Head of caudate nucleus (tissue), 42 donors: ENCODE measurements at regions of chr1 and their contacts with region 1.

Region 1: GRCh38 chr1:207868774-207869721 is 41.9 kb downstream of the CD34 start:
- DNase-seq: peak; percentile 49 to 90 (median 80)

Region 2: GRCh38 chr1:207321079-207321789 is 547.8 kb before region 1 on chr1 and contains the start of gene CD55:
- intact Hi-C with region 1: no loop called
- DNase-seq: peak; percentile 76 to 95 (median 88)

Region 3: GRCh38 chr1:207828485-207829158 is 40.4 kb before region 1 on chr1:
- intact Hi-C with region 1: loop called (anchors 2 kb)
- DNase-seq: peak in 38 of 42 donors; percentile 58 to 89 (median 78)

Region 4: DNA sequence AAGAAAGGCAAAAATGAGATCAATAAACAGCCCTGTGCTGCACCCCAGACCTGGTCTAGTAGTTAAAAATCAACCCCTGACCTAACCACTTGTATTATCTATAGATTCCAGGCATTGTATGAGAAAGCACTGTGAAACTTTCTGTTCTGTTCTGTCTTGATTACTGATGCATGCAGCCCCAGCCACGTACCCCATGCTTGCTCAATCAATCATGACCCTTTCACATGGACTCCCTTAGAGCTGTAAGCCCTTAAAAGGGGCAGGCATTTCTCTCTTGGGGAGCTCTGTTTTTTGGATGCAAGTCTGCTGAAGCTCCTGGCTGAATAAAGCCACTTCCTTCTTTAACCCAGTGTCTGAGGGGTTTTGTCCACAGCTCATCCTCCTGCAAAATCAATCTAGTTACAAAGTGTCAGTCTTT is 66.1 kb after region 1 on chr1:
- intact Hi-C with region 1: no loop called
- DNase-seq: no peak

Region 5: GRCh38 chr1:207946756-207947155 is 77.7 kb after region 1 on chr1:
- intact Hi-C with region 1: no loop called
- DNase-seq: no peak